IMR-90 (cell line): ENCODE measurements at regions of chr1 and their contacts with region 1.

Region 1: DNA sequence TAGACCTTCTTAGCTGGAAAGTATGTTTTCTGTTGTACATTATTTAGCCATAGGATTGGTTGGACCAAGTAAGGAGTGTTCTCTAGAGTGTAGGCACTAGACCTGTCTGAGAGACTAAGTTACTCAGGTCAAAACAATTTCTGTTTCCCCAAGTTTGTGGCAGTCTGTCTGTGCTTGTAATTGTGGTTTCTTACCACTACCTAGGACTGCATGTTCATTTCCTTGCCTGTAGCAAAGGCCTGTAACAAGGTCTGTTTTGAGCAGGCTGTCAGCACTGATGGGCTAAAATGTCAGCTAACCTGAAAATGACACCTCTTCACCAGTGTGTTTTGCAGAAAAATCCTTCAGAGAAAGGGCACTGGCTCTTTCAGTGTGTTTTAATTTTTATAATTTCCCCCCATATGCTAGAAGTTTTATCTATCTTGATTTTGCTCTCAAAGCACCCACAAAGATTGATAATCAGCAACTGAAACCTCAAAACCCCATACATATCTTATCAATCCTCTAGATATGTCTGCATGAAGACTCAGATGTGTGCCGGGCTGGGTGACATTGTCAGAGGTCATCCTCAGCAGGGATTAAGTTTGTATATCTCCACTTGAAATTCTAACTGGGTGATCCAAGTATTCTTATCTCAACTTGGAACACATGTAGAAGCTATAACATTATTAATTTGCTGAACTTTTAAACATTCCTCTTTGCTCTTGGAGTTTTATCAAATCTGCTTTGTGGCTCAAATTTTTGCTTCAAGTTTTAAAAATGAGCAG is 50.7 kb upstream of the ST6GALNAC3 start:
- DNase-seq: peak; percentile 11
- ATAC-seq: peak; percentile 52
- H3K4me3 ChIP-seq: no peak overlapping the region
- H3K27ac ChIP-seq: no peak overlapping the region
- H3K4me1 ChIP-seq: peaks cover 7% of the 10 kb centered on the region; the same call in 1 of the 2 replicates
- H3K27me3 ChIP-seq: no peaks in the 10 kb centered on the region
- CTCF ChIP-seq: no peak
- POLR2A ChIP-seq: no peak
- RAD21 ChIP-seq: no peak

Region 2: DNA sequence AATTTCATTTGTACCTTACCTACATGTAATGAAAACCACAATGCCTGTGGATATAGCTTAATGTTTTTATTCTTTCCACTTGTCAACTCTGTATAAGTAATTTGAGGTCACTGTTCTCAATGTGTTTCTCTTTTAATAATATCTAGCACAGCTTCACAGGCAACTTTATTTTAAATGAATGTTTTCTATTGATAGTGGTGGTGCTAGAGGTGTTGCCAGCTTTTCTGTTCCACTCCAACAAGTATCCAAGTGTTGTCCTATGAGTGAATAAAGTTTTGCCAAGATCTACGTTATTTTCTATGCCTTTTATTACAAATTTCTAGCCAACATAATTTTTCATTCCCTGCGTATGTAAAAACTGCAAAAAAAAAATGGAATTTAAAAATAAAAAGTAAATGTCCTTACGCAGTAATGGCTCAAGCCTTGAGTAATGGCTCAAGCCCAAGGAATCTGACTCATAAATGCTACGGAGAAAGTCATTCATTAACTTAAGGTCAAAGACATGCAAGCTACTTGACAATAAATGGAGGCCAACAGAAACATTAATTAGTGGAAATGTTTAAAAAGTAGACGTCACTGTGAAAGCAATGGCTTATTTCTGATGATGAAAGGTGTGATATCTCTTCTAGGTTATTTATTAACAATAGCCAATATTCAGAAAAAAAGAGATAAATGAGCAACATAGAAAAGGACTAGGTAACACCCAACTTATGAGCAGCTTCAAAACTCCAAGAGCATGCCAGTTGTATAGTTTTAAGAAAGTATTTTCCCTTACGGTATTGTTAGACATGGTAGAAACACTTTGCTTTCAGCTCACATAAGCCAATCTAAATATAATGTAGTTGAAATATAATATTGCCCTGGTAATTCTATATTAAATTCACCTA is 484.4 kb before region 1 on chr1:
- CTCF ChIA-PET with region 1: no interaction called
- POLR2A ChIA-PET with region 1: no interaction called
- dilution Hi-C with region 1: no loop called
- in situ Hi-C with region 1: no loop called
- intact Hi-C with region 1: no loop called
- DNase-seq: no peak
- ATAC-seq: no peak
- H3K4me3 ChIP-seq: no peak overlapping the region
- H3K27ac ChIP-seq: no peak overlapping the region
- H3K4me1 ChIP-seq: no peaks in the 10 kb centered on the region
- H3K27me3 ChIP-seq: no peaks in the 10 kb centered on the region
- CTCF ChIP-seq: no peak
- POLR2A ChIP-seq: no peak
- RAD21 ChIP-seq: no peak

Region 3: GRCh38 chr1:75707191-75707590 is 316.7 kb before region 1 on chr1:
- CTCF ChIA-PET with region 1: no interaction called
- POLR2A ChIA-PET with region 1: no interaction called
- dilution Hi-C with region 1: no loop called
- in situ Hi-C with region 1: no loop called
- intact Hi-C with region 1: no loop called
- DNase-seq: no peak
- ATAC-seq: no peak
- H3K4me3 ChIP-seq: no peak overlapping the region
- H3K27ac ChIP-seq: no peak overlapping the region
- H3K4me1 ChIP-seq: no peaks in the 10 kb centered on the region
- H3K27me3 ChIP-seq: no peaks in the 10 kb centered on the region
- CTCF ChIP-seq: no peak
- POLR2A ChIP-seq: no peak
- RAD21 ChIP-seq: no peak

Region 4: DNA sequence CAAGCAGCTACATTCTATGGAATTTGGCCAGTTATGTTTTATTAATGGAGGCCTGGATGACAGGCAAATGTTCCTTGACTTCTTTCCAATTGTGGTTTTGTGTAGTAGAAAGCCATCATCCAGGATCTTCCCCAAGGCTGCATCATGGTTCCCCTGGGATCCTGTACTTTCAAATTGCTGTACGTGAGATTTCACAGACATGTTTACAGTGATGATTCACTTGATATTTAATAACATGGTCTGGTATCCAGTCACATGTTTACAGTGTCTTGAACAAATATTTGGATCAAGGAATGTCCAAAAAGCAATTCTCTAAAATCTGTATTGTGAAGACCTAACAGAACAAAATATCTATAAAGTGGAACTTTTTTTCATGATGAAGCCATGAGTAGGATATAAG is 17.6 kb before region 1 on chr1:
- CTCF ChIA-PET with region 1: interaction called, 3 read pairs
- POLR2A ChIA-PET with region 1: no interaction called
- dilution Hi-C with region 1: no loop called
- in situ Hi-C with region 1: no loop called
- intact Hi-C with region 1: loop called (anchors 1 kb)
- DNase-seq: peak; percentile 83
- ATAC-seq: peak; percentile 92
- H3K4me3 ChIP-seq: no peak overlapping the region
- H3K27ac ChIP-seq: no peak overlapping the region
- H3K4me1 ChIP-seq: peaks cover 11% of the 10 kb centered on the region
- H3K27me3 ChIP-seq: no peaks in the 10 kb centered on the region
- CTCF ChIP-seq: no peak
- POLR2A ChIP-seq: no peak
- RAD21 ChIP-seq: no peak

Region 5: DNA sequence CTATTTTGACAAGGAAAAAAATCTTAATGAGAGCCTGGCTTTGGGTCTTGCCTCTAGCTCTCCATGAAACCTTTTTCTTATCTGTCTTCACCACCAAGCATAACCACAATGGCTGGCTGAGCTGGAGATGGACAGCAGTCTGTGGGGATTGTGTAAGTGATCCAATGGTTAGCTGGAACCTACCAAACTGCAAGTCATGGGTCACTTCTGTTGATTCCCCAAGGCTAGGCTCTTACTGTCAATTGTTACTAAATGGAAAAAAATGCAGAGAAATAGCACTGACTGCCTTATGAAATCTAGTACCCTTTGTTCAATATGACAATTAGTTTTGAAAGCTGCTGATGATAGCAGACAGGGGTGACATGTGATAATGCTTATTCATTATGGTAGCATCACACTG is 409.7 kb after region 1 on chr1:
- CTCF ChIA-PET with region 1: no interaction called
- POLR2A ChIA-PET with region 1: no interaction called
- dilution Hi-C with region 1: no loop called
- in situ Hi-C with region 1: no loop called
- intact Hi-C with region 1: no loop called
- DNase-seq: peak; percentile 20
- ATAC-seq: peak; percentile 64
- H3K4me3 ChIP-seq: no peak overlapping the region
- H3K27ac ChIP-seq: no peak overlapping the region
- H3K4me1 ChIP-seq: no peaks in the 10 kb centered on the region; the same call in 1 of the 2 replicates
- H3K27me3 ChIP-seq: no peaks in the 10 kb centered on the region
- CTCF ChIP-seq: no peak
- POLR2A ChIP-seq: no peak
- RAD21 ChIP-seq: no peak